A673 (cell line): ENCODE measurements at regions of chr20 and their contacts with region 1.

Region 1: GRCh38 chr20:35806075-35806474 is 34.3 kb downstream of the PHF20 start:
- DNase-seq: no peak
- H3K4me3 ChIP-seq: no peak overlapping the region
- H3K27ac ChIP-seq: no peak overlapping the region
- H3K4me1 ChIP-seq: no peaks in the 10 kb centered on the region
- H3K27me3 ChIP-seq: no peaks in the 10 kb centered on the region
- CTCF ChIP-seq: no peak

Region 2: GRCh38 chr20:36043892-36044515 is 237.9 kb after region 1 on chr20:
- CTCF ChIA-PET with region 1: no interaction called
- POLR2A ChIA-PET with region 1: interaction called, 10 read pairs
- intact Hi-C with region 1: no loop called
- DNase-seq: no peak
- H3K4me3 ChIP-seq: no peak overlapping the region
- H3K27ac ChIP-seq: no peak overlapping the region
- H3K4me1 ChIP-seq: no peaks in the 10 kb centered on the region
- H3K27me3 ChIP-seq: no peaks in the 10 kb centered on the region
- CTCF ChIP-seq: no peak